Heart right ventricle (tissue), 16 donors: ENCODE measurements at regions of chr9 and their contacts with region 1.

Region 1: DNA sequence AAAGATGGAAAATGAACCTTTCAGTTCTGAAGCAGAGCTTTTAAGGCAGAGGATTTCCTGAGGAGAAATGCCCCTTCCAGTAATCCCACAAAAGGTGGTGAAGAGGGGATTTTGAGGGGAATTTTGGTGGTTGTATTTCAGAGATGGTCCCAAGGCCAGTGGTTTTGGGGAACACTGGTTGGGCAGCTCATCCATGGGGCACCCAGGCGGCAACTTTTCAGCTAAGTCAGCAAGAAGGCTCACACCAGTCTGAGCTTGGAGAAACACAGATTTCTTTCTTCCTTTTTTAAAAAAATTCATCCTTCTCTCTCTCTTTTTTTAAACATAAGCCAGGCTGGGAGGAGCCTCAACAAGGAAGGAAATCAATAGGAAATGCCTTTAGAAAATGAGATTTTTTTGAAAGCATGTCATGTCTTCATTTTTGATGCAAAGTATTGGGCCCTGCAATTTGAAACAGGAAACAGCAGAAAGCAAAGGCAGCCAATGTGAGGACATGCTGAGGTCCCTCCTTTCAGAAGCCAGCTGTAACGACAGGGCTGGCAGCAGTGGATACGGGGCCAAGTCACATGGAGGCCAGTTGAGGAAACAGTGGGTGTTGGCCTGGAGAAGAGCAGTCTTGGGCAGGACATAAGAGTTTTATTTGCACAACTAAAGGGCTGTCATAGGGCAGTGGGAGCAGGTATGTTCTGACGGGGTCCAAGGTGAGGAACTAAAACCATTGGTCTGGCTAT is 155.3 kb upstream of the KLF4 start:
- DNase-seq: peak; percentile 43 to 68
- ATAC-seq: peak; percentile 76 to 95 (median 87)
- H3K4me3 ChIP-seq: no peak overlapping the region
- H3K27ac ChIP-seq: peak overlapping the region in 8 of 10 donors; percentile 18 to 74 (median 52)
- H3K4me1 ChIP-seq: peaks cover 0 to 21% (median 13%) of the 10 kb centered on the region in 9 donors
- H3K27me3 ChIP-seq: no peaks in the 10 kb centered on the region
- CTCF ChIP-seq: no peak

Region 2: DNA sequence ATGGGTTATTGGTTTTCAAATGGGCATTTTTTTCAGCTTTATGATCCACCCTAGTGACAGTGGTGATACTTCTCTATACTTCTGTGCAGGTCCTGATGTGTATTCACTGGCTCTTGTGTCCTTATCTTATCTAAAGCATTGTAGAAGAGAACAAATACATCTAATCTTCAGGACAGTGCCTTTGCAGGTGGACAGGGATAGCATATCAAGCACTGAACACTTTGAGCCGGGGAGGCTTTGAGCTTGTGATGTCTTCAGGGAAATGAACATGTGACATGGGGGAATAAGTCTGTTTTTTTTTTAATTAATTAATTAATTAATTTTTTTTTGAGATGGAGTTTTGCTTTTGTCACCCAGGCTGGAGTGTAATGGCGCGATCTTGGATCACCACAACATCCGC is 39.9 kb before region 1 on chr9:
- intact Hi-C with region 1: no loop called
- DNase-seq: no peak
- ATAC-seq: no peak
- H3K4me3 ChIP-seq: no peak overlapping the region
- H3K27ac ChIP-seq: no peak overlapping the region
- H3K4me1 ChIP-seq: peaks cover 0 to 20% (median 10%) of the 10 kb centered on the region in 9 donors
- H3K27me3 ChIP-seq: no peaks in the 10 kb centered on the region
- CTCF ChIP-seq: no peak

Region 3: DNA sequence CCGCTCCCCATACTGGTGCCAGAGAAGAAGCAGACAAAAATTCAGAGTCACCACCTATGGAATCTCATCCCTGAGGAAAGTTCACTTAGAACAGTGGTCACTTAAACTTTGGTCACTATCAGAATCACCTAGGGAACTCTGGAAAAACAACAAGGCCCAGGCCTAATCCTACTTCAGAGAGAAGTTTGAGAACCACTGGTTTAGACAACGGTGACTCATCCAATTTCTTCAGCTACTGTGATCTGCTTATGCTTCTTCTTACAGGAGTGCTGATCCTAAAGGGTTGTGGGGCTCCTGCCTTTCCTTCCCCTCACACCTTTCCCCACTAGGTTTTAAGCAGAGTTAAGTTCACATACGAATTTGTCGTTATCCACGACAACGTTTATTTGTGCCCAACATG is 39.3 kb after region 1 on chr9:
- intact Hi-C with region 1: no loop called
- DNase-seq: no peak
- ATAC-seq: no peak
- H3K4me3 ChIP-seq: no peak overlapping the region
- H3K27ac ChIP-seq: peak overlapping the region in 4 of 10 donors; percentile 20 to 77 (median 48)
- H3K4me1 ChIP-seq: peaks cover 0 to 34% (median 0%) of the 10 kb centered on the region in 9 donors
- H3K27me3 ChIP-seq: no peaks in the 10 kb centered on the region
- CTCF ChIP-seq: no peak

Region 4: DNA sequence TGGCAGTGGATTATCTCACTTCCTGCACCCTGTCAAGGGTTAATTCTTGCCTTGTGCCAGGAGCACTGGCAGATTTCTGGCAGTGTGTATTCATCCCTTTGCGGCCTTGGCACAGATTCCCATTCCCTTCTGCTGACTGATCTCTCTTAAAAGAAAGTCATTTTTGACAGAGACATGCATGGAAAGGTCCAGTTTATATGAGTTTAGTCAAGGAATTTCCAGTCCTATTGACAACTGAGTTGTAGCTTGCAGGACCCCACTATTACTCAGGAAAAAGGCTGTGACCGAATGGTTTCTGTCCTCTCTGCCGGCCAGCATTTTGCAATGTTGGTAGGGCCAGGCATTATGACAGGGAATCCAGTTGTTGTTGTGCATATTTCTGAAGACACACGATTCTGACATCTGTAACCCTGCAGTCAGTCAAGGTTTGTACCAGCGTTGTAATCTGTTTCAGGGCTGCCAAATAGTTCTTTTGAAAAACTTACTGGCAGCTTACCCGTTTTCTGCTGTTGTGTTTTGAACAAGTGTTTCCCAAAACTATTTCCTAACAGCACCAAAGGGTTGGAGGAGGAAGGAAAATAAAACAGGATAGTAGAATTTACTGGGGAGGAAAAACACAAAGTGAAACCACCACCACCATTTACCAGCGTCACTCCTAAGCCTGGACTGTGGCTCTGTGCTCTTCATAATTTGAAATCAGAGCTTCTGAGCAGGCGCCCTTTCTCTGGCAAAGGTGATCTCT is 88.1 kb after region 1 on chr9:
- intact Hi-C with region 1: loop called in 1 of 10 experiments (anchors 10 kb)
- DNase-seq: peak in 1 of 2 donors; percentile 49
- ATAC-seq: peak; percentile 50 to 81 (median 68)
- H3K4me3 ChIP-seq: peak overlapping the region in 8 of 10 donors; percentile 0 to 38 (median 18)
- H3K27ac ChIP-seq: peak overlapping the region; percentile 63 to 95 (median 84)
- H3K4me1 ChIP-seq: peaks cover 3 to 42% (median 28%) of the 10 kb centered on the region in 9 donors
- H3K27me3 ChIP-seq: no peaks in the 10 kb centered on the region
- CTCF ChIP-seq: no peak

Region 5: GRCh38 chr9:107749787-107750444 is 105.0 kb after region 1 on chr9:
- intact Hi-C with region 1: loop called in 1 of 10 experiments (anchors 10 kb)
- DNase-seq: peak; percentile 81 to 91
- ATAC-seq: peak; percentile 88 to 96 (median 94)
- H3K4me3 ChIP-seq: no peak overlapping the region
- H3K27ac ChIP-seq: peak overlapping the region; percentile 56 to 84 (median 76)
- H3K4me1 ChIP-seq: peaks cover 7 to 52% (median 30%) of the 10 kb centered on the region in 9 donors
- H3K27me3 ChIP-seq: no peaks in the 10 kb centered on the region
- CTCF ChIP-seq: no peak

Region 6: GRCh38 chr9:108053555-108054061 is 408.7 kb after region 1 on chr9:
- intact Hi-C with region 1: loop called in 2 of 10 experiments (anchors 10 kb)
- DNase-seq: peak; percentile 54 to 61
- ATAC-seq: peak; percentile 51 to 78 (median 66)
- H3K4me3 ChIP-seq: peak overlapping the region in 3 of 10 donors; percentile 8 to 10 (median 8)
- H3K27ac ChIP-seq: peak overlapping the region in 7 of 10 donors; percentile 30 to 54 (median 46)
- H3K4me1 ChIP-seq: peaks cover 5 to 55% (median 15%) of the 10 kb centered on the region in 9 donors
- H3K27me3 ChIP-seq: peaks cover 0 to 6% (median 0%) of the 10 kb centered on the region in 7 donors
- CTCF ChIP-seq: no peak

Region 7: DNA sequence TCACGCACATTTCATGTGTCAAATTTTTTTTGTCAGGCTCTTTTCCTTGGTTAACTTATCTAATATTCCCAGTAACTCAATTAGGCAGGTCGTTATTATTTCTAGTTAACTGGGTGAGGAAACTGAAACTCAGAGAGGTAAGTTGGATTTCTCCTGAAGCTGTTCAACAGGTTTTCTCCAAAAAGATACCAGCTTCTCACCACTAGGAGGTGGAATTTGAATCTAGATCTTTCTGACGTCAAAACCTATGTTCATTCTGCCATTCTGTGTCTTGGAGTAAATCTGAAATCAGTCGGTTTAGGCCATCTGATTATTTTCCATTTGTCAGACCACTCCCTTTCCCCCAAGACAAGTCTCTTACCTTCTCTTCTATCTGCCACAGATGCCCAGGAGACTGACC is 638.0 kb after region 1 on chr9:
- intact Hi-C with region 1: no loop called
- DNase-seq: no peak
- ATAC-seq: no peak
- H3K4me3 ChIP-seq: no peak overlapping the region
- H3K27ac ChIP-seq: no peak overlapping the region
- H3K4me1 ChIP-seq: no peaks in the 10 kb centered on the region
- H3K27me3 ChIP-seq: no peaks in the 10 kb centered on the region
- CTCF ChIP-seq: peak in 2 of 9 donors; percentile 22 to 37